A673 (cell line): ENCODE measurements at regions of chr3 and their contacts with region 1.

Region 1: GRCh38 chr3:177050501-177051237 is 146.6 kb downstream of the TBL1XR1 start:
- DNase-seq: peak; percentile 77
- H3K4me3 ChIP-seq: no peak overlapping the region
- H3K27ac ChIP-seq: peak overlapping the region; percentile 79
- H3K4me1 ChIP-seq: peaks cover 77% of the 10 kb centered on the region
- H3K27me3 ChIP-seq: no peaks in the 10 kb centered on the region
- CTCF ChIP-seq: peak; percentile 72

Region 2: DNA sequence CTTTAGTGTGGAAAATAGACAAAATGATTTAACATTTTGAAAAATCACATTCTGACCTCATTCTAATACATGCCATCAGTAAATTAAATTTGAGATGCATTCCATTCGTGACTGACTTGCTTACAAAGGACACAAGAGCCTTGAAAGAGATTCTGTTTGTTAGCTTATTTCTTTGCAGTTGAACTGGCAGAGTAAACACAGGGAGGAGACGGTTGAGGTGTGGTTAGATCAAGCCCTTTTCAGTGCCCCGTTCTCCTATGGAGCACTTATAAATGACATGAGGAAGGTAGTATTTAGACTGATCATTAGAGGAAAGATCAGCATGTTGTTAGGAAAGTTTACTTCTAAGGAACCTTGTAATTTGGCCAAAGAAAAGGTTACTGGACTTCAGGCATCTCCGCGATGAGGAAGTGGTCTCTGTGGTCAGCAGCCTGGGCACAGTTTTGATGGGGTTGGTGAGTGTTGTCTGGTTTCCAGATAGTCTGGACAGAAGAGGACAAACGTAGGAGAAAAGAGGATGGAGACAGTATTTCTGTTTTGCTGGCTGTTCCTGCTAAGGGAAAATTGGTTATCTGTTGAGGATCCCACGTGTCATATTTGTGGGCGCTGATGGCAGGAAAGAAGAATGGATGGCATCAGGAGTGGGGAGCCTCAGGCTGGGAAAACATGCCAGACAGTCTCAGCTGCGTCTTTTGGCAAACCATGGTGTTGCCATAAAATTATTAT is 475.5 kb after region 1 on chr3:
- CTCF ChIA-PET with region 1: no interaction called
- POLR2A ChIA-PET with region 1: no interaction called
- intact Hi-C with region 1: no loop called
- DNase-seq: no peak
- H3K4me3 ChIP-seq: no peak overlapping the region
- H3K27ac ChIP-seq: no peak overlapping the region
- H3K4me1 ChIP-seq: peaks cover 4% of the 10 kb centered on the region
- H3K27me3 ChIP-seq: no peaks in the 10 kb centered on the region
- CTCF ChIP-seq: no peak

Region 3: DNA sequence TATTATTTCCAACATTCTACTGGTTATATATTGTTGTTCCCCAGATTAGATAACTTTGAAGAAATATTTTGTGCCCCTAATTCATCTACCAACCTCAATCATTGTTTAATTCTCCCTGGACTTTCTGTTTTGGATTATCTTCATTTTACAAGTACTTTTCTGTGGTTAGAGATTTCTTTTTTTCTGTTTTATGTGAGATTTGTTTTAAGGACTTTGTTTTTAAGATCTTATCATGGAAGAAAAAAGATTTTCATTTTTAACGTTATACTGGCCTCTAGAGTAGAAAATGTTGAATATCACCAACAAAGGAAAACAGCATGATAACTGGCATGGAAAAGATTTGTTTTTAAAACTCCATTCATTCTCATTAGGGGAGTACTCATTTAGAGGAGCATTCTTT is 1274.7 kb after region 1 on chr3:
- CTCF ChIA-PET with region 1: no interaction called
- POLR2A ChIA-PET with region 1: no interaction called
- intact Hi-C with region 1: loop called (anchors 10 kb)
- DNase-seq: peak; percentile 69
- H3K4me3 ChIP-seq: no peak overlapping the region
- H3K27ac ChIP-seq: no peak overlapping the region
- H3K4me1 ChIP-seq: peaks cover 26% of the 10 kb centered on the region
- H3K27me3 ChIP-seq: no peaks in the 10 kb centered on the region
- CTCF ChIP-seq: peak; percentile 65

Region 4: GRCh38 chr3:178385280-178385952 is 1334.7 kb after region 1 on chr3:
- CTCF ChIA-PET with region 1: no interaction called
- POLR2A ChIA-PET with region 1: no interaction called
- intact Hi-C with region 1: loop called (anchors 10 kb)
- DNase-seq: peak; percentile 64
- H3K4me3 ChIP-seq: no peak overlapping the region
- H3K27ac ChIP-seq: no peak overlapping the region
- H3K4me1 ChIP-seq: peaks cover 14% of the 10 kb centered on the region
- H3K27me3 ChIP-seq: no peaks in the 10 kb centered on the region
- CTCF ChIP-seq: peak; percentile 92